HCT116 (cell line): ENCODE measurements at regions of chr12 and their contacts with region 1.

Region 1: DNA sequence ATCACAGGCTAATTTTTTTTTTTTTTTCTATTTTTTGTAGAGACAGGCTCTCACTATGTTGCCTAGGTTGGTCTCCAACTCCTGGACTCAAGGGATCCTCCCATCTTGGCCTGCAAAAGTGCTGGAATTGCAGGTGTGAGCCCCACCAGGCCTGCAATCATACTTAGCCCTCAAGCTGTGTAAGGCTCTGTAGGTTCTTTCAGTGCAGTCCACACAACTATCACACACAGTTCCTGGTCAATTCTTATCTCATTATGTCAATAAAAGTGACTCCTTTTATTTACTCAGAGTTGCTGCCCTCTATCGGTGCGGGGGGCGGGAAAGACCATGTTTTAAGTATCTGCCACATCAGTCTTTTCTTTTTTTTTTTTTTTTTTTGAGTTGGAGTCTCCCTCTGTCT is 29.0 kb downstream of the SLC2A3 start:
- DNase-seq: peak; percentile 56
- ATAC-seq: peak; percentile 91
- H3K4me3 ChIP-seq: no peak overlapping the region
- H3K27ac ChIP-seq: no peak overlapping the region
- H3K4me1 ChIP-seq: peaks cover 8 to 14% of the 10 kb centered on the region in 2 experiments; a peak in 3 of 4 replicates
- H3K27me3 ChIP-seq: no peaks in the 10 kb centered on the region
- CTCF ChIP-seq: peak; percentile 59 to 70 (median 63); a peak in 5 of 6 replicates
- POLR2A ChIP-seq: no peak
- RAD21 ChIP-seq: peak; percentile 52; the same call in 1 of the 2 replicates

Region 2: DNA sequence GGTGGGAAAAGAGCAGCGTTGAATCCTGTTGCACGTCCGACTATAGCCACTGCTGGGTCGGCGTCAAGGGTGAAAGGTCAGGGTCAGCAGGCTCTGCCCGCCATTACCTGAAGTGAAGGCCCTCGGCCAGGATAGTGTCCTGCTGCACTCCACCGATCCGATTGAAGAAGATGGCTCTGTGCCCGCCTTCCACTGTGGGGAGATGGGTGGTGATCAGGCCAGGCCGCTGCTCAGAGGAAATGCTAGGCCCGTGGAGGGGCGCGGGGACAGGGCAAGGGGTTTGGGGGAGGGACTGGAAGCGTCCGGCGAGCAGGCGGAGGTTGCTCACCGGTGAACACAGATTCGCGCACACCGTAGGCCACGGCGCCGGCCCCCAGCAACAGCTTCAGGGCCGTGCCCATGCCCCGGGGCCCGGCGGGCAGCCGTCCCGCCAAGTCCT is 936.9 kb before region 1 on chr12:
- CTCF ChIA-PET with region 1: no interaction called
- POLR2A ChIA-PET with region 1: no interaction called
- RAD21 ChIA-PET with region 1: no interaction called
- intact Hi-C with region 1: no loop called
- DNase-seq: no peak
- ATAC-seq: peak; percentile 39
- H3K4me3 ChIP-seq: peak overlapping the region; percentile 96 to 100
- H3K27ac ChIP-seq: peak overlapping the region; percentile 77
- H3K4me1 ChIP-seq: peaks cover 26 to 49% of the 10 kb centered on the region in 2 experiments
- H3K27me3 ChIP-seq: no peaks in the 10 kb centered on the region
- CTCF ChIP-seq: no peak
- POLR2A ChIP-seq: no peak
- RAD21 ChIP-seq: no peak

Region 3: GRCh38 chr12:7542813-7543498 is 364.1 kb before region 1 on chr12:
- CTCF ChIA-PET with region 1: no interaction called
- POLR2A ChIA-PET with region 1: no interaction called
- RAD21 ChIA-PET with region 1: no interaction called
- intact Hi-C with region 1: no loop called
- DNase-seq: no peak
- ATAC-seq: no peak
- H3K4me3 ChIP-seq: no peak overlapping the region
- H3K27ac ChIP-seq: no peak overlapping the region
- H3K4me1 ChIP-seq: no peaks in the 10 kb centered on the region
- H3K27me3 ChIP-seq: no peaks in the 10 kb centered on the region
- CTCF ChIP-seq: no peak
- POLR2A ChIP-seq: no peak
- RAD21 ChIP-seq: no peak

Region 4: GRCh38 chr12:7797698-7798398 is 109.2 kb before region 1 on chr12:
- CTCF ChIA-PET with region 1: interaction called, 6 read pairs
- POLR2A ChIA-PET with region 1: interaction called, 12 read pairs
- RAD21 ChIA-PET with region 1: interaction called in 1 of 2 experiments, 4 read pairs
- intact Hi-C with region 1: no loop called
- DNase-seq: no peak
- ATAC-seq: no peak
- H3K4me3 ChIP-seq: no peak overlapping the region
- H3K27ac ChIP-seq: no peak overlapping the region
- H3K4me1 ChIP-seq: no peaks in the 10 kb centered on the region
- H3K27me3 ChIP-seq: no peaks in the 10 kb centered on the region
- CTCF ChIP-seq: no peak
- POLR2A ChIP-seq: no peak
- RAD21 ChIP-seq: no peak

Region 5: DNA sequence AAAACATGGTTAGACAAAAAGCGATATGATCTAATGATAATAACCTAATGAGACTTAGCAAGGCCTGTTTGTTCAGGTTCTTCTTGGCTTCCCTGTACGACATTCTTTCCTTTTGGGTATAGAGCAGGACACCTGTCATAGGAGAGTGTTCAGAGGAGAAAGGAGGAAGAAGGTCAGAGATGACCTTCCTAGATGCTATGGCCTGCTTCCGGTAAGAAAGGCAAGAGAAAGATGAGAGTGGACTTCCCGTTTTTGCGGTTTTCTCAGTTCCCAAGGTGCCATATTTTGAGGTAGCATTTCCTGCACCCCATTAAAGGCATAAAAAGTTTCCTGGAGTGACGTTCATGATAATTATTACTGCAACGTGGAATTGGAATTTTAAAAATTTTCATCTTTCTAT is 625.0 kb after region 1 on chr12:
- CTCF ChIA-PET with region 1: no interaction called
- POLR2A ChIA-PET with region 1: no interaction called
- RAD21 ChIA-PET with region 1: no interaction called
- intact Hi-C with region 1: no loop called
- DNase-seq: no peak
- ATAC-seq: no peak
- H3K4me3 ChIP-seq: no peak overlapping the region
- H3K27ac ChIP-seq: no peak overlapping the region
- H3K4me1 ChIP-seq: no peaks in the 10 kb centered on the region
- H3K27me3 ChIP-seq: peaks cover 61% of the 10 kb centered on the region
- CTCF ChIP-seq: no peak
- POLR2A ChIP-seq: no peak
- RAD21 ChIP-seq: no peak